Esophagus muscularis mucosa (tissue), 4 donors: ENCODE measurements at regions of chr14 and their contacts with region 1.

Region 1: DNA sequence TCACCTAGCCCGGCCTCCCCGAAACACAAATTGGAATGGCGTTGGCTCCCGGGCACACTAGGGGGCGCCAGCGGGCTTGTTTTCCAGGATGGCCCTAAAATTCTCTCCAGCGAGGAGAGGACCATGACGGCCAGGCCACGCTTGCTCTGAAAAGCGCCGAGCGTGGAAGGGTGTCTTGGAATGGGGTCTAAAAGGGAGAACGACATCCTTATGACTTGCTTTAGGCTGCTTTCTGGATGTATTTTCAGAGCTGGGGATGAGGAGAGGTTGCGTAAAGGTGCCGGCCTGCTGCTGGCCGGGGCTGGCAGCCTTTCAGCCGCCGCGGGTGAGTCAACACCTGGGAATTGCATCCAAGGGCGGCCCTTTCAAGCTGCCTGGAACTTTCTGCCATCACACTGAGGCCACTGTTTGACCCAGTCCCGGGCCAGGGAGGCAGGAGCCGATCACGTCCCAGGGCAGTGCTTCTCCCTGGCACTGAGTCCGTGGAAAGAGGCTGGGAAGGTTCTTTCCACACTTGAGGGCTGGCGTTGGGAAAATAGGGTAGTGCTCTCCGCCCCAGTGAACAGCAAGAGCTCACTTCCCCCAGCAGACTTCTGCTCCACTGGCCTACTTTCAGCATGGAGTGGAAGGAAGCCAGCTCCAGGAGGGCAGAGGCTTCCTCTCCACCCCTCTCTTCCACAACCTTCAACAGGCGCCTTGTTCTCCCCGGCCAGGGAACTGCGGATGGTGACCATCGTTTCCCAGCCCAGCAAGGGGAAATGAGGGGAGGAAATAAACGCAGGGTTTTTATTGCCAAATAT is 216.2 kb downstream of the TTC8 start:
- DNase-seq: peak; percentile 94
- H3K4me3 ChIP-seq: peak overlapping the region; percentile 47 to 60 (median 50)
- H3K27ac ChIP-seq: peak overlapping the region; percentile 78 to 91 (median 86)
- H3K4me1 ChIP-seq: peaks cover 10 to 22% (median 16%) of the 10 kb centered on the region in 4 donors
- H3K27me3 ChIP-seq: no peaks in the 10 kb centered on the region
- CTCF ChIP-seq: peak; percentile 92 to 97 (median 94)
- EP300 ChIP-seq: no peak
- POLR2A ChIP-seq: no peak

Region 2: DNA sequence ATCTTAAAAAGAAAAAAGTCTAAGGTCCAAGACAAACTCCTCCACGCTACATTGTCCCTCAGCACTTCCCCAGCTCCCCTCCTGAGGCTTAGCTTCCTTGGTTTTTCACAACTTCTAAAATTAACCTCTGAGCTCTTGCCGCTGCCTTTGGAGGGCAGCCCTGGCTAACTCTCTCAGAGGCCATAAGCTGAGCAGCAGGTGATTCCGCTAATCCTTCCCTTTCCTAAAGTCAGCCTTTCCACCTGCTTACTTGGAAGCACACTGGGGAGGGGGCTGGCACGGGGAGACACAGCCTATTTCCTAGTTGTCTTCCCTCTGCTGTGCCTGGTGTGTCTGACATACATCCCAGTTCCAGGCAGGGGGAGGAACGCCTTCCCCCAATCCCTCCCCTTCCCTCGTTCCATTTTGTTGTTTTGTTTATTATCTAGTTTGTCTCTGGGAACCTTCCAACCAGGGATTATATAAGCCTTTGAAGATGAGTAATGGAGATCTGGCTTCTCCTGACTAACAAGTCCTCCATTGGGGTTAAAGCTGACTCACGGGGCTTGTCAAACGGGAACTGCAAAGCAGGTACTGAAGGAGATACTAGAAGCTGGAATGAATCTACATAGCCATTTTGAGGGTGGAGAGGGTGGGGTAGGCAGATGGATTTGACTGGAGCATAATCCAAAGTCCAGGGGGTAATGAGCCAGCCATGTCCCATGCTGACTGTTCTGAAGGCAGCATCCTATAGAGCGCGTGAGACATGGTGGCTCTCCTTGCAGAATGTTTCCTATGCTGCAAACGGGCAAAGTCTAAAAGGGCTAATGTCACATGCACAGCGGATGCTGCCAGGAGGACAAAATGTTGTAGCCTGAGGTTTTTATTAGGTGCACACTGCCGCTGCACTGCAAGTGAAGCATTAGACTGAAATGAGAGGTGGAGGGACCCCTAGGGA is 145.5 kb after region 1 on chr14:
- intact Hi-C with region 1: loop called (anchors 10 kb)
- DNase-seq: no peak
- H3K4me3 ChIP-seq: no peak overlapping the region
- H3K27ac ChIP-seq: peak overlapping the region in 2 of 4 donors; percentile 31 to 35
- H3K4me1 ChIP-seq: peaks cover 23 to 42% (median 31%) of the 10 kb centered on the region in 4 donors
- H3K27me3 ChIP-seq: no peaks in the 10 kb centered on the region
- CTCF ChIP-seq: no peak
- EP300 ChIP-seq: no peak
- POLR2A ChIP-seq: no peak

Region 3: GRCh38 chr14:89198544-89199329 is 158.1 kb after region 1 on chr14:
- intact Hi-C with region 1: no loop called
- DNase-seq: no peak
- H3K4me3 ChIP-seq: no peak overlapping the region
- H3K27ac ChIP-seq: no peak overlapping the region
- H3K4me1 ChIP-seq: peaks cover 6 to 18% (median 10%) of the 10 kb centered on the region in 4 donors
- H3K27me3 ChIP-seq: no peaks in the 10 kb centered on the region
- CTCF ChIP-seq: no peak
- EP300 ChIP-seq: no peak
- POLR2A ChIP-seq: no peak